ENCODE measurements at regions of chr19 and their contacts with region 1.

Region 1: GRCh38 chr19:3700221-3701032 is at the start of gene PIP5K1C:
- DNase-seq: peak; percentile 93
- ATAC-seq: peak; percentile 97
- H3K4me3 Mint-ChIP-seq: peak within 1 kb of the TSS; percentile 85
- H3K27ac Mint-ChIP-seq: peak within 1 kb of the TSS; percentile 68
- H3K4me1 Mint-ChIP-seq: peaks cover 23% of the 10 kb centered on the region
- H3K27me3 Mint-ChIP-seq: no peaks in the 10 kb centered on the region
- total RNA-seq, gene PIP5K1C: 23.9 to 37.7 TPM

Region 2: DNA sequence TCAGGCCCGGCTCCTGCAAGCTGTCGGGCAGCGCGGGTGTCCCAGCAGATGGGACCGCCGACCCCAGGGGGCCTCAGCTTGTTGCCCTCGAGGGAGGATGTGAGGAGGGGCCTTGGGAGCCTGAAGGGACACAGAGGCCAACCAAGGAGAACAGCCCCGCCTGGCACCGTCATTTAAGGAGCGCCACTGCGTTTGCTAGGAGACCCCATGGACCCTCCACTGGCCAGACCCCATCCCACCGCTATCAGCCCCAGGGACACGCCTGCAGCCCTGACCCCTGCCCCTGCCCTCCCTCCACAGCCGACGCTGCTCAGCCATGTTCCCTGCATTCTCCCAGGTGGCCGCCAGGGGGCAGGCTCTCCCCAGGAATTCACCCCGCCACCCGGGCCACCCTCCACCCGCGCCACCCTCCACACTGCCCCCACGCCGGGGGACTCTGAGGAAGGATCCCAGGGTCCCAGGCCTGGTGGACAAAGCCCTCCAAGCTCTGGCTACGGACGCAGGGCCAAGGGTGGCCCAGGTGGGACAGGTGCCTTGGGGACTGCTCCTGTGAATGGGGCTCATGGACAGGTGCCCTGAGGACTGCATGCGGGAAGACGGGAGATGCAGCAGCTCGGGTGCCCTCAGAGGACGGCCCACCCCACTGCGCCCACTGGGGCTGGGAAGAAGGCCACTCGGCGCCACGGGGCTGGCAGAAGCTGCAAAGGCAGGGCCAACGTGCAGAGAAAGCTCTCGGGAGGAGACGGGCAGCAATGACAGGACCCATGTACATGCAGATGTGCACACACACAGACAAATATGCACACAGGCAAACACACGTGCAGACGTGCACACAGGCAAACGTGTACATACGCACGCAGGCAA is 34.5 kb before region 1 on chr19:
- CTCF ChIA-PET with region 1: interaction called, 20 read pairs
- DNase-seq: peak; percentile 80
- ATAC-seq: peak; percentile 83
- H3K4me3 Mint-ChIP-seq: no peak overlapping the region
- H3K27ac Mint-ChIP-seq: no peak overlapping the region
- H3K4me1 Mint-ChIP-seq: peaks cover 21% of the 10 kb centered on the region
- H3K27me3 Mint-ChIP-seq: no peaks in the 10 kb centered on the region

Region 3: GRCh38 chr19:3670796-3671679 is 29.4 kb before region 1 on chr19:
- CTCF ChIA-PET with region 1: interaction called, 20 read pairs
- DNase-seq: peak; percentile 86
- ATAC-seq: peak; percentile 63
- H3K4me3 Mint-ChIP-seq: peak overlapping the region; percentile 59
- H3K27ac Mint-ChIP-seq: peak overlapping the region; percentile 86
- H3K4me1 Mint-ChIP-seq: peaks cover 37% of the 10 kb centered on the region
- H3K27me3 Mint-ChIP-seq: no peaks in the 10 kb centered on the region

Measured in activated CD8-positive, alpha-beta memory T cell treated with anti-CD3 and anti-CD28 coated beads, Interleukin-2, amount 10 ng/mL, durations not matched to agents 7 days and 5 days (primary cell).